Endothelial cell of umbilical vein (primary cell): ENCODE measurements at regions of chr18 and their contacts with region 1.

Region 1: GRCh38 chr18:6543330-6543908 is 128.7 kb upstream of the L3MBTL4 start:
- DNase-seq: peak; percentile 60
- H3K4me3 ChIP-seq: no peak overlapping the region
- H3K27ac ChIP-seq: no peak overlapping the region
- H3K4me1 ChIP-seq: peaks cover 9% of the 10 kb centered on the region
- H3K27me3 ChIP-seq: no peaks in the 10 kb centered on the region
- CTCF ChIP-seq: peak; percentile 23 to 26
- POLR2A ChIP-seq: no peak

Region 2: DNA sequence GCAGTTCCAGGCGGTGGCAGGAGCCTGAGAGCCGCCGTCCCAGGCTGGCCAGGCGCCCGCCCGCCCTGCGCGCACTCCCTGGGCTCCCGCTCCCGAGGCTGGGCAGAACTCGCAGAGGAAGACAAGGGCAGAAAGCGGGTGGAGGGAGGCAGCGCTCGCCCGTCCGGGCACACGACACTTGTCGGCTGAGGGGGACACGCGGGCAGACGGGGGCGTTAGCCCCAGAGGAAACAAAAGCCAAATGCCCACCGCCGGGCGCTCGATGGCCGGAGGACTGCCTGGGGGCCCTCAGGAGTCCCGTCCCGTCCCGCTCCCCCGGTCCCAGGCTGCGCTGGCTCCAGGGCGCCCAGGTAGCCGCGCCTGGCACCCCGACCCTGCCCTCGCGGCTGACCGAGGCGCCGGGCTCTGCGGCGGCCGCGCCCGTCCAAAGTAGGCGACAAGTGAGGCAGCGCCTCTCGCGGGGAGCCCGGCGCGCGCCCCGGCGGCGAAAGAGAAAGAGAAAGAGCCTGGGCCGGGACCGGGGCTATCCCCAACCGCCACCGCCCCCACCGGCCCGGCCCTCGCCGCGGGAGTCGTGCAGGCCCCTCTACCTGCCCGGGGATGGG is 129.2 kb before region 1 on chr18:
- CTCF ChIA-PET with region 1: no interaction called
- POLR2A ChIA-PET with region 1: no interaction called
- dilution Hi-C with region 1: no loop called
- intact Hi-C with region 1: loop called (anchors 5 kb)
- DNase-seq: no peak
- H3K4me3 ChIP-seq: peak overlapping the region; percentile 21 to 41 (median 30)
- H3K27ac ChIP-seq: no peak overlapping the region
- H3K4me1 ChIP-seq: no peaks in the 10 kb centered on the region
- H3K27me3 ChIP-seq: peaks cover 24 to 25% of the 10 kb centered on the region in 2 experiments
- CTCF ChIP-seq: no peak
- POLR2A ChIP-seq: no peak

Region 3: GRCh38 chr18:6795307-6795706 is 251.9 kb after region 1 on chr18:
- CTCF ChIA-PET with region 1: no interaction called
- POLR2A ChIA-PET with region 1: no interaction called
- dilution Hi-C with region 1: no loop called
- intact Hi-C with region 1: no loop called
- DNase-seq: no peak
- H3K4me3 ChIP-seq: no peak overlapping the region
- H3K27ac ChIP-seq: no peak overlapping the region
- H3K4me1 ChIP-seq: peaks cover 4% of the 10 kb centered on the region
- H3K27me3 ChIP-seq: no peaks in the 10 kb centered on the region
- CTCF ChIP-seq: no peak
- POLR2A ChIP-seq: no peak

Region 4: GRCh38 chr18:7021994-7022840 is 478.8 kb after region 1 on chr18:
- CTCF ChIA-PET with region 1: no interaction called
- POLR2A ChIA-PET with region 1: no interaction called
- dilution Hi-C with region 1: no loop called
- intact Hi-C with region 1: loop called (anchors 5 kb)
- DNase-seq: peak; percentile 47
- H3K4me3 ChIP-seq: no peak overlapping the region
- H3K27ac ChIP-seq: no peak overlapping the region
- H3K4me1 ChIP-seq: no peaks in the 10 kb centered on the region
- H3K27me3 ChIP-seq: no peaks in the 10 kb centered on the region
- CTCF ChIP-seq: peak; percentile 26 to 31
- POLR2A ChIP-seq: no peak